Activated CD8-positive, alpha-beta memory T cell treated with anti-CD3 and anti-CD28 coated beads, Interleukin-2, amount 10 ng/mL, durations not matched to agents 7 days and 5 days (primary cell): ENCODE measurements at regions of chr3 and their contacts with region 1.

Region 1: GRCh38 chr3:32781210-32781968 is 36.4 kb upstream of the TRIM71 start:
- DNase-seq: peak; percentile 81
- ATAC-seq: peak; percentile 95
- H3K4me3 Mint-ChIP-seq: peak overlapping the region; percentile 81
- H3K27ac Mint-ChIP-seq: peak overlapping the region; percentile 50
- H3K4me1 Mint-ChIP-seq: peaks cover 10% of the 10 kb centered on the region
- H3K27me3 Mint-ChIP-seq: peaks cover 9% of the 10 kb centered on the region

Region 2: GRCh38 chr3:32703491-32703972 is 77.9 kb before region 1 on chr3:
- CTCF ChIA-PET with region 1: no interaction called
- DNase-seq: no peak
- ATAC-seq: no peak
- H3K4me3 Mint-ChIP-seq: no peak overlapping the region
- H3K27ac Mint-ChIP-seq: peak overlapping the region; percentile 47
- H3K4me1 Mint-ChIP-seq: peaks cover 31% of the 10 kb centered on the region
- H3K27me3 Mint-ChIP-seq: no peaks in the 10 kb centered on the region

Region 3: DNA sequence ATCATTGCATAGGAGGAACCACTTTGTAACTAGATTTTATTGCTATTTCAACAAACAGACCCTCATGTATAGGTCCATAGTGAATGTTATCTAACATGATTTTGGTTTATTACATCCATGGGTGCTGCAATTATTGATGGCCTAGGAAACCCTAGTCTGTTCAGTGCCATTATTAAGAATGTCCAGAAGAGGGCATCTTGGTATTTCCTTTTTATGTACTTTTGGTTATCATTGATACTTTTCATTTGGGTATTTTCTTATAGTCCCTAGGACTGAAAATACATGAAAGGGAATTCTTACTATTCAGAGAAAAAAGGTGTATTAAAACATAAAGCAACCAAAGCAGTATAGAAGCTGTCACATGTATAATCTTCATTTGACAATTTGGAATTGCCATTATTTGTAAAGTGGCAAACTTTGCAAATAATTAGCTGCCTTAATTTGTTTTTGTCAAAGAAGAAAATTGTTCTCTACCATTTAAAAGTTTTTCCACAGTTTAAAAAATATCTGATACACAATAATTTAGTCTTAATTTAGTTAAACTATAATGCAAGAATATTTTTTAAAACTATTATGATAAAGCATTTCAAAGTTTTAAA is 47.7 kb before region 1 on chr3:
- CTCF ChIA-PET with region 1: interaction called, 11 read pairs
- DNase-seq: no peak
- ATAC-seq: no peak
- H3K4me3 Mint-ChIP-seq: no peak overlapping the region
- H3K27ac Mint-ChIP-seq: no peak overlapping the region
- H3K4me1 Mint-ChIP-seq: no peaks in the 10 kb centered on the region
- H3K27me3 Mint-ChIP-seq: no peaks in the 10 kb centered on the region

Region 4: DNA sequence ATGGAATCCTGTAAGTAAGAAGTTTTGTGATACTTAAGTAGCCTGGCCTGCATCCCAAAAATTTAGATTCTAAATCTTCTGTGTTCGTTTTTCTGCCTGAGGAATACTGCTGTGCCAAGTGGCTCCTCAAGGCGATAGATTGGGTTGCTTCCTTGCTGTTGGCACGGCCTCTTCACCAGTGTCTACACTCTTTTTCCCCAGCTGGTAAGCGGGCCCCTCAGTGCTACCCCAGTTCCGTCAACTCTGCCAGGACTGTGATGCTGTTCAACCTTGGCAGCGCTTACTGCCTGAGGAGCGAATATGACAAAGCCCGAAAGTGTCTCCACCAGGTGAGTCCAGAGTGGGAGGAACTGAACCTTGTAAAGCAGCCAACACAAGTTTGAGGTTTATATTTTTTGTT is 16.9 kb before region 1 on chr3:
- CTCF ChIA-PET with region 1: interaction called, 11 read pairs
- DNase-seq: no peak
- ATAC-seq: no peak
- H3K4me3 Mint-ChIP-seq: no peak overlapping the region
- H3K27ac Mint-ChIP-seq: no peak overlapping the region
- H3K4me1 Mint-ChIP-seq: peaks cover 2% of the 10 kb centered on the region
- H3K27me3 Mint-ChIP-seq: no peaks in the 10 kb centered on the region

Region 5: DNA sequence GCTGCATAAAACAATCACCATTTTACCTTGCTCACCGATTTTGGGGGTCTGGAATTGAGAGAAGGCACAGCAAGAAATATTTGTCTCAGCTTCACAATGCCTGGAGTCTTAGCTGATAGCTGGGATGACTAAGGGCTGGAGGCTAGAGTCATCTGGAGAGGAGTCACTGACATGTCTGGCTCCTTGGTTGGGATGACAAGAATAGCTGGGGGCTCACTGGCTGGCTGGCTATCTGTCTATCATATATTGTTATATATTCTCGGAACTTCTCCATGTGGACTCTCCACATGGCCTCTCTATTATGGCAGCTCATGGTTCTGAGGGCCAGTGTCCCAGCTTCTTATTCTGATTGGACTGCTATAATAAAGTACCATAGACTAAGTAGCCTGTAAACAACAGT is 16.4 kb after region 1 on chr3:
- CTCF ChIA-PET with region 1: no interaction called
- DNase-seq: no peak
- ATAC-seq: no peak
- H3K4me3 Mint-ChIP-seq: no peak overlapping the region
- H3K27ac Mint-ChIP-seq: no peak overlapping the region
- H3K4me1 Mint-ChIP-seq: no peaks in the 10 kb centered on the region
- H3K27me3 Mint-ChIP-seq: peaks cover 6% of the 10 kb centered on the region

Region 6: DNA sequence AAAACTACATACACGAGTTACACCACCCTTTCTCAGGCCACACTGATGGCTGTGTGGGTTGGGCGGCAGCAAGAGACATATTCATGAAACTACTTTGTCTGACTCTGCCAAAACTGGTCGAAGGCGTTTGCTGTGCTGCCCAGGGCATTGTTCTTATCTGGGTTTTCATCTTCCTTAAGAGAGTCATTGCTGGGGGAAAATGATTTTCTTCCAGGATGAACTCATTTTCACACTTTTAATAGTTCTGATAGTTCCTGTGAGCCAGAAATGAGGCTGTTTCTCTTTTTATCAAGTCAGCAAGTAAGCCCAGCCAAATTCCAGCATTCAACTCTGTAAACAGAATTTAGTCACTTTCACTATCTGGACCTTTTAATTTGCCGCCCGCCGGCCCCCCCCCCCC is 84.0 kb after region 1 on chr3:
- CTCF ChIA-PET with region 1: no interaction called
- DNase-seq: no peak
- ATAC-seq: no peak
- H3K4me3 Mint-ChIP-seq: no peak overlapping the region
- H3K27ac Mint-ChIP-seq: no peak overlapping the region
- H3K4me1 Mint-ChIP-seq: peaks cover 2% of the 10 kb centered on the region
- H3K27me3 Mint-ChIP-seq: peaks cover 18% of the 10 kb centered on the region